Activated CD8-positive, alpha-beta T cell treated with anti-CD3 and anti-CD28 coated beads for 36 hours (primary cell): ENCODE measurements at regions of chr2 and their contacts with region 1.

Region 1: DNA sequence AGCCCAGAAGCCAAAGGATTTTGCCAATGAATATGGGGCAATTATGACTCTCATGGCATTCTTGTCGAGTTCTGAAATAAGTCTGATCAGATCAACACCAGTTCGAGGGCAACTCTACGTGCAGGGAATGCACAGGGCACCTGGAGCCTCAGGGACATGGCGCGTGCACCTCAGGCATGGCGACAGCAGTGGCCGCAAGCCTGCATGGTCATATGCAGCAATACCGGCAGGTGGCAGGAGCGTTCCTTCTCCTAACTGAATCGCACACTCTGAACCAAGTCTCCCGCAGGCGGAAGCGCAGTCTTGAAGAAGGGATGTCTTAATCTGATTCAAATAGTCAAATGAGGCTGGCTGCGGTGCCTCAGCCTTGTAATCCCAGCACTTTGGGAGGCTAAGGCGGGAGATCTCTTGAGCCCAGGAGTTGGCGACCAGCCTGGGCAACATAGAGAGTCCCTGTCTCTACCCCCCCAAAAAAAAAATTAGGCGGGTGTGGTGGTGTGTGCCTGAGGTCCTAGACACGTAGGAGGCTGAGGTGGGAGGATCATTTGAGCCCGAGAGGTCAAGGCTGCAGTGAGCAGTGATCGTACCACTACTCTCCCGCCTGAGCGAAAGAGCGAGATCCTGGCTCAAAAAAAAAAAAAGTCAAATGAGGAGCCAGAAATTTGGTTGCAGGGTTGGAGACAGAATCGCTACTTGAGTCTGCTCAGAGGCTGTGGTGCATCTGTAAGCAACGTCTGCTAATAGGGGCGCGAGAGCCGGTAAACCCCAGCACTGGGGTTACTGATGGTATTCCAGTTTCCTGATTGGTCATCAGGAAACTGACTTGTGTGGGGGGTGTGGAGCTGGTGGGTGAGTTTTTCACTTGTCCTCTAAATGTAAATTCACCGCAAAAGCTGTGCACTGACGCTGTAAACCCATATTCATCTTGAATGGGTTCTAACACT is 28.8 kb downstream of the FHL2 start:
- DNase-seq: peak; percentile 94
- ATAC-seq: peak; percentile 99
- H3K4me3 Mint-ChIP-seq: no peak overlapping the region
- H3K27ac Mint-ChIP-seq: peak overlapping the region; percentile 7
- H3K4me1 Mint-ChIP-seq: peaks cover 6% of the 10 kb centered on the region
- H3K27me3 Mint-ChIP-seq: no peaks in the 10 kb centered on the region
- CTCF ChIP-seq: peak; percentile 84

Region 2: GRCh38 chr2:105287692-105288091 is 82.3 kb before region 1 on chr2:
- CTCF ChIA-PET with region 1: no interaction called
- POLR2A ChIA-PET with region 1: no interaction called
- intact Hi-C with region 1: no loop called
- DNase-seq: peak; percentile 70
- ATAC-seq: peak; percentile 64
- H3K4me3 Mint-ChIP-seq: no peak overlapping the region
- H3K27ac Mint-ChIP-seq: no peak overlapping the region
- H3K4me1 Mint-ChIP-seq: no peaks in the 10 kb centered on the region
- H3K27me3 Mint-ChIP-seq: no peaks in the 10 kb centered on the region
- CTCF ChIP-seq: peak; percentile 46

Region 3: GRCh38 chr2:105454801-105455485 is 84.9 kb after region 1 on chr2:
- CTCF ChIA-PET with region 1: no interaction called
- POLR2A ChIA-PET with region 1: no interaction called
- intact Hi-C with region 1: no loop called
- DNase-seq: peak; percentile 34
- ATAC-seq: peak; percentile 64
- H3K4me3 Mint-ChIP-seq: no peak overlapping the region
- H3K27ac Mint-ChIP-seq: no peak overlapping the region
- H3K4me1 Mint-ChIP-seq: no peaks in the 10 kb centered on the region
- H3K27me3 Mint-ChIP-seq: peaks cover 3% of the 10 kb centered on the region
- CTCF ChIP-seq: no peak

Region 4: DNA sequence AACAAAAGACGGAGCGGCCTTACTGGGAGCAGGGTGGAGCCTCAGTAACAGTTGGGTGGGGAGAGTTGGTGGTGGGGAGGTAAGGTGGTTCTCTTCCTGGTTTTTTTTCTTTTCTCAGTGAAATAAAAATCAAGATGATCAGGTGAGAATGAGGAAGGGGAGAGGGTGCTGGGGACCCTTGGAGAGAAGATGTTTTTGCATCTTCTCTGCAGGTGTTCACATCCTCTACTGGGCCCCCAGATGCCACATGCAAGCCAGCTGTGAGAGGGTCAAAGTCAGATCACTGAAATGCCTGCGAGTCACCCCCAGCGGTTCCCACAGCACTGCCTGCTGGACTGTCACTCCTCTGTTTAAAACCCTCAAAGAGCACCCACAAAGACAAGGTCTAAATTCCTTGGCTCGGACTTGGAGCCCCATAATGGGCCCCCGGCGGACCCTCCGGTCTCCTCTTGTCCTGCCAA is 98.6 kb after region 1 on chr2:
- CTCF ChIA-PET with region 1: no interaction called
- POLR2A ChIA-PET with region 1: no interaction called
- intact Hi-C with region 1: no loop called
- DNase-seq: peak; percentile 10
- ATAC-seq: peak; percentile 52
- H3K4me3 Mint-ChIP-seq: peak overlapping the region; percentile 26
- H3K27ac Mint-ChIP-seq: peak overlapping the region; percentile 64
- H3K4me1 Mint-ChIP-seq: peaks cover 13% of the 10 kb centered on the region
- H3K27me3 Mint-ChIP-seq: no peaks in the 10 kb centered on the region
- CTCF ChIP-seq: no peak

Region 5: GRCh38 chr2:105521205-105521604 is 151.2 kb after region 1 on chr2:
- CTCF ChIA-PET with region 1: interaction called, 55 read pairs
- POLR2A ChIA-PET with region 1: no interaction called
- intact Hi-C with region 1: loop called (anchors 1 kb)
- DNase-seq: no peak
- ATAC-seq: no peak
- H3K4me3 Mint-ChIP-seq: no peak overlapping the region
- H3K27ac Mint-ChIP-seq: no peak overlapping the region
- H3K4me1 Mint-ChIP-seq: no peaks in the 10 kb centered on the region
- H3K27me3 Mint-ChIP-seq: no peaks in the 10 kb centered on the region
- CTCF ChIP-seq: peak; percentile 92

Region 6: DNA sequence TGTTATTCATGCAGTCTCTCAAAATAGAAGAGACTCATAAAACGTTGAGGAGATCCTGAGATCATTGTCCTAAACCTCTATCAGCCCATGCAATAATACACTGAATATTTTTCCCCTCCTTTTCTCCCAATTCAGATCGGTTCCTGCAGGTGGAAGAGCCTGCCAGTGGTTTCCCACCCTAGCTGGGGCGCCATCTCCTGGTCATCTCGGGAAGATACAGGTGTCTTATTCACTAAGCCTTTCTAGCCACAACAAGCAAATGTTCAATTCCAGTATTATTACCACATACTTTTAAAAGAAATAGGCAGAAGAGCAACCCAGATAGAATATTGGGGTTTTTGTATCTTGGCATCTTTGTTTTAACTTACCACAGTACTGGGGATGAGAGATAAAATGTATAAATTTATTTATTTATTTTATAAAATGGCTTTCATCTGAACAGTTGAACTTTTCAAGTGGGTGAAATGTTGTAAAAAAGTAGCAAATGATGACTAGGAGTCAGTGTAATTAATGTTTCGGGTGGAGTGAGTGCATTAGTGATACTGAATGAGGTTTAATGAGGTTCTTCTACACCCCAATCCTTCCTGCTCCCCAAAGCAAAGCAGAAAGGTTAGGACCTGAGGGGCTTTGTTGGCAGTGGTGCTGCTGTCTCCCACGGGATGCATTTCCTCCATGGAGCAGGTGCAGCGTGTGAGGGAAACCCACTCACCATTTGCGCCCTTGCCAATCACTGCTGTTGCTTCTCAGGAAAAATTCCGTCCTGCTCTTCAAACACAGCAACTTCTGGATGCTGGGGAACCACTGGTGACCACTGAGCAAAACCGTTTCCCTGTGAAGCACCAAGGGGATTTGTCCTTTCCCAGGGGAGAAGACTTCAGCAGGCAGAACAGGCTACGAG is 176.0 kb after region 1 on chr2:
- CTCF ChIA-PET with region 1: interaction called, 11 read pairs
- POLR2A ChIA-PET with region 1: no interaction called
- intact Hi-C with region 1: loop called (anchors 1 kb)
- DNase-seq: peak; percentile 82
- ATAC-seq: peak; percentile 76
- H3K4me3 Mint-ChIP-seq: no peak overlapping the region
- H3K27ac Mint-ChIP-seq: no peak overlapping the region
- H3K4me1 Mint-ChIP-seq: peaks cover 8% of the 10 kb centered on the region
- H3K27me3 Mint-ChIP-seq: no peaks in the 10 kb centered on the region
- CTCF ChIP-seq: peak; percentile 93

Region 7: GRCh38 chr2:105929516-105929915 is 559.5 kb after region 1 on chr2:
- CTCF ChIA-PET with region 1: no interaction called
- POLR2A ChIA-PET with region 1: no interaction called
- intact Hi-C with region 1: no loop called
- DNase-seq: peak; percentile 78
- ATAC-seq: peak; percentile 69
- H3K4me3 Mint-ChIP-seq: no peak overlapping the region
- H3K27ac Mint-ChIP-seq: peak overlapping the region; percentile 83
- H3K4me1 Mint-ChIP-seq: peaks cover 62% of the 10 kb centered on the region
- H3K27me3 Mint-ChIP-seq: no peaks in the 10 kb centered on the region
- CTCF ChIP-seq: no peak